ENCODE measurements at regions of chr17 and their contacts with region 1.

Region 1: GRCh38 chr17:46139432-46140210 is 53.6 kb downstream of the KANSL1 start:
- DNase-seq: no peak
- ATAC-seq: no peak
- H3K4me3 ChIP-seq: no peak overlapping the region
- H3K27ac ChIP-seq: no peak overlapping the region
- H3K4me1 ChIP-seq: peaks cover 6% of the 10 kb centered on the region; the same call in 1 of the 2 replicates
- H3K27me3 ChIP-seq: no peaks in the 10 kb centered on the region
- CTCF ChIP-seq: no peak
- POLR2A ChIP-seq: no peak
- RAD21 ChIP-seq: no peak

Region 2: GRCh38 chr17:44673893-44674292 is 1465.7 kb before region 1 on chr17:
- CTCF ChIA-PET with region 1: interaction called, 11 read pairs
- POLR2A ChIA-PET with region 1: no interaction called
- dilution Hi-C with region 1: no loop called
- in situ Hi-C with region 1: no loop called
- intact Hi-C with region 1: no loop called
- DNase-seq: peak; percentile 4
- ATAC-seq: peak; percentile 58
- H3K4me3 ChIP-seq: no peak overlapping the region
- H3K27ac ChIP-seq: no peak overlapping the region
- H3K4me1 ChIP-seq: peaks cover 2% of the 10 kb centered on the region; the same call in 1 of the 2 replicates
- H3K27me3 ChIP-seq: no peaks in the 10 kb centered on the region
- CTCF ChIP-seq: no peak
- POLR2A ChIP-seq: no peak
- RAD21 ChIP-seq: no peak

Region 3: DNA sequence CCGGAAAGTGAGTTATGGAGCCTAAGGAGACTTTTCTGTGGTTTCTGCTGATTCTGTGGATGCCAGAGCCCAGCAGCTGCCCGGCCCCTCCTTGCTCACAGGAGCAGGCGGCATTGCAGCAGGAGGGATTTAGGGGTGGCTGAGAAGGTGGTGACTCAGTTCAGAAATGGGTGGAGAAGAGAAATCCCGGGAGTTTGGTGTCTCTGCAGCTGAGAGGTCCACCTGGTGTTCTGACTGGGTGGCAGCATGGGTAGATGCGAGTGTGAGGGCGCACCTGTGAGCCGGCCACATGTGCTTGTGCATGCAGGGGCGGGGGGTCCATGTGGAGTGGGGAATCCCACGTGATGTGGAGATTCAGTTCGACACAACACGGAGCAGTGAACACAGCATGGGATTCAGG is 311.0 kb before region 1 on chr17:
- CTCF ChIA-PET with region 1: no interaction called
- POLR2A ChIA-PET with region 1: no interaction called
- dilution Hi-C with region 1: no loop called
- in situ Hi-C with region 1: no loop called
- intact Hi-C with region 1: no loop called
- DNase-seq: no peak
- ATAC-seq: no peak
- H3K4me3 ChIP-seq: no peak overlapping the region
- H3K27ac ChIP-seq: no peak overlapping the region
- H3K4me1 ChIP-seq: no peaks in the 10 kb centered on the region
- H3K27me3 ChIP-seq: peaks cover 30% of the 10 kb centered on the region
- CTCF ChIP-seq: no peak
- POLR2A ChIP-seq: no peak
- RAD21 ChIP-seq: no peak

Region 4: DNA sequence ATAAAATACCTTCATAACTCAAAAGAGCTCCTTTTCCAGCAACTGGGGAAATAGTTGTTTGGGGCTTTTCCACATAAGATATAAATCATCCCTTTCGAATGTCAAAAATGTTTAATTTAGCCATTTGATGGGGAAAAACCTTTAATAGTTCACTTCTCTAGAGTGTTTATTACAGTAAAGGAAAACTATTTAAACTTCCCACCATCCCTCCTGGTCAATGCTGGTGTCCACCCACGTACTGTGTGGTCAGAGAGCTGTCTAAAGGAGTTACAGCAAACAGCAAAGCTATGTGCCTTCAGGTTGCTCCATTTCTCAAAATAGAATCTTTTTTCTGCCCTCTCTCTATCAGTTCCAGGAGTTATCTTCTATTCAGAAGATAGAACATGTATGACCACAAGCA is 20.1 kb after region 1 on chr17:
- CTCF ChIA-PET with region 1: no interaction called
- POLR2A ChIA-PET with region 1: interaction called, 15 read pairs
- dilution Hi-C with region 1: no loop called
- in situ Hi-C with region 1: no loop called
- intact Hi-C with region 1: no loop called
- DNase-seq: peak; percentile 87
- ATAC-seq: peak; percentile 84
- H3K4me3 ChIP-seq: no peak overlapping the region
- H3K27ac ChIP-seq: no peak overlapping the region
- H3K4me1 ChIP-seq: peaks cover 20% of the 10 kb centered on the region
- H3K27me3 ChIP-seq: no peaks in the 10 kb centered on the region
- CTCF ChIP-seq: no peak
- POLR2A ChIP-seq: no peak
- RAD21 ChIP-seq: no peak

Region 5: GRCh38 chr17:46184696-46185095 is 45.1 kb after region 1 on chr17:
- CTCF ChIA-PET with region 1: no interaction called
- POLR2A ChIA-PET with region 1: interaction called, 4 read pairs
- dilution Hi-C with region 1: no loop called
- in situ Hi-C with region 1: loop called (anchors 5 kb)
- intact Hi-C with region 1: no loop called
- DNase-seq: no peak
- ATAC-seq: no peak
- H3K4me3 ChIP-seq: no peak overlapping the region
- H3K27ac ChIP-seq: no peak overlapping the region
- H3K4me1 ChIP-seq: peaks cover 6% of the 10 kb centered on the region; the same call in 1 of the 2 replicates
- H3K27me3 ChIP-seq: no peaks in the 10 kb centered on the region
- CTCF ChIP-seq: no peak
- POLR2A ChIP-seq: no peak
- RAD21 ChIP-seq: no peak

Measured in IMR-90 (cell line).